Activated B cell treated with CpG ODN at 0.5 μM for 24 hours (primary cell): ENCODE measurements at regions of chr1 and their contacts with region 1.

Region 1: GRCh38 chr1:206982216-206982615 is 12.0 kb upstream of the FCAMR start:
- DNase-seq: peak; percentile 52
- ATAC-seq: peak; percentile 91
- H3K4me3 Mint-ChIP-seq: no peak overlapping the region
- H3K27ac Mint-ChIP-seq: no peak overlapping the region
- H3K4me1 Mint-ChIP-seq: no peaks in the 10 kb centered on the region
- H3K27me3 Mint-ChIP-seq: peaks cover 5% of the 10 kb centered on the region
- CTCF ChIP-seq: no peak

Region 2: DNA sequence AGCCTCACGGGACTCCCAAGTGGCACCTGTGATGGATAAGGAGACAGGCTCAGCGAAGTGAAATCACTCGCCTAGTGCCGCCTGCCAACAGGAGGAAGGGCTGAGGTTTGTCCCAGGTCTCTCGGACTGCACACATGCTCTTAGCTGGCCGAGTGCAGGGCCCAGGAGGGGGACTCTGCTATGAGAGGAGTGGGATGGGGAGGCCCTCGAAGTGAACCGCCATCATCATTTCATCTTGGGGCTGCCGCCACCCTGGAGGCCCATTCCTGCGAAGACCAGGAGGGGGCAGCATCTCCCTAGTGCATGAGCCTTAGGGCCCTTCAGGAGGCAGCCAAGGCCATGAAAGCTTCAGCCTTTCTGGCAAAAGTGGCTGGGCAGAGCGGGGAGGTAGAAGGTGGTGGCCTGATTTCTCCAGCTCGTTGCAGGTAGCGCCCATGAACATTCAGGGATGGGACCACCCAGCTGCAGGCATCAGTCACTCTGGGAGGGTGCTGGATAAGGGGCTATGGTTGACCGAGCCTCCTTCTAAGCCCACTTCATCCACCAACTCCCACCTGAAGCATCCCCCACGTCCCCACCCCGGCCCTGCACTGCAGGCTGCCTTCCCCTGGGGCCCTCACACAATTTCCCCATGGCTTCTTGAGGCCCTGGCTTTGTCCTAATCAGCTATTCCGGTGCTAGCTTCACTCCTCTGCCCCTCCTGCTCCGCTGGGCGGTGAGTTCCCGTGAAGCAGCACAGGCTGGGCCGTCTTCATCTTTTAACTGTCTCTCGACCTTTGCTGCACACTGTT is 492.0 kb before region 1 on chr1:
- CTCF ChIA-PET with region 1: interaction called, 5 read pairs
- POLR2A ChIA-PET with region 1: no interaction called
- intact Hi-C with region 1: loop called (anchors 1 kb)
- DNase-seq: peak; percentile 66
- ATAC-seq: peak; percentile 95
- H3K4me3 Mint-ChIP-seq: no peak overlapping the region
- H3K27ac Mint-ChIP-seq: no peak overlapping the region
- H3K4me1 Mint-ChIP-seq: peaks cover 10% of the 10 kb centered on the region
- H3K27me3 Mint-ChIP-seq: no peaks in the 10 kb centered on the region
- CTCF ChIP-seq: no peak

Region 3: GRCh38 chr1:206658264-206658980 is 323.8 kb before region 1 on chr1:
- CTCF ChIA-PET with region 1: interaction called, 19 read pairs
- POLR2A ChIA-PET with region 1: no interaction called
- intact Hi-C with region 1: loop called (anchors 1 kb)
- DNase-seq: peak; percentile 52
- ATAC-seq: peak; percentile 85
- H3K4me3 Mint-ChIP-seq: peak overlapping the region; percentile 58
- H3K27ac Mint-ChIP-seq: no peak overlapping the region
- H3K4me1 Mint-ChIP-seq: peaks cover 15% of the 10 kb centered on the region
- H3K27me3 Mint-ChIP-seq: peaks cover 4% of the 10 kb centered on the region
- CTCF ChIP-seq: no peak

Region 4: DNA sequence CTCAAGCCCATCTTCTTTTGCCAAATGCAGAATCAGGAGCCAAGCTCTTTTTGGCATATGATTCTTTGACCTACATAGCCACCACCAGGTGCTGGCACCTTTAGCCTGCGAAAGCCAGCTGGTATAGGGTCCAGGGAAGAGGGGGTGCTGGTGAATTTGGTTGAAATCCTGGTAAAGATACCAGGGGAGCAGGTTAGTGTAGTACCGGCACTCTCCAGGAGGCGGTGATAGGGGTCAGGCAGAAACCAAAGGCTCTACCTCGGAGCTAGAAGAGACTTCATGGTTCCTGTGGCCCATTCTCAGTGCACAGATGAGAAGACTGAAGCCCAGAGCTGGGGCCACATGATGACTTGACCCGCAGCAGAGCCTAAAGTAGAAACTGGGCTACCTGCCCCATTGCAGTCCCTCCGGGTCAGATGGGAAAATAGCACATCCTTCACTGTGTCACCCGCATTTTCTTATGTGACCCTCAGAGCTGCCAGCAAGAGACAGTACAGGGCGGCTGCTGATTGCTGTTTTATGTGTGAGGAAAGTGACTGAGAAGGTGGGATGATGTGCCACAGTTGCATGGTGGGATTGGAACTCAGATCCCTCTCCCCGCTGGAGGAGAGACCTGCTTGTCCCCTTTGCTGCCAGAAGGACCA is 247.6 kb before region 1 on chr1:
- CTCF ChIA-PET with region 1: interaction called, 59 read pairs
- POLR2A ChIA-PET with region 1: interaction called, 9 read pairs
- intact Hi-C with region 1: loop called (anchors 1 kb)
- DNase-seq: peak; percentile 74
- ATAC-seq: peak; percentile 69
- H3K4me3 Mint-ChIP-seq: no peak overlapping the region
- H3K27ac Mint-ChIP-seq: peak overlapping the region; percentile 24
- H3K4me1 Mint-ChIP-seq: peaks cover 43% of the 10 kb centered on the region
- H3K27me3 Mint-ChIP-seq: no peaks in the 10 kb centered on the region
- CTCF ChIP-seq: peak; percentile 41

Region 5: GRCh38 chr1:206856674-206857464 is 125.3 kb before region 1 on chr1:
- CTCF ChIA-PET with region 1: interaction called, 16 read pairs
- POLR2A ChIA-PET with region 1: no interaction called
- intact Hi-C with region 1: loop called (anchors 2 kb)
- DNase-seq: no peak
- ATAC-seq: peak; percentile 78
- H3K4me3 Mint-ChIP-seq: no peak overlapping the region
- H3K27ac Mint-ChIP-seq: no peak overlapping the region
- H3K4me1 Mint-ChIP-seq: peaks cover 6% of the 10 kb centered on the region
- H3K27me3 Mint-ChIP-seq: peaks cover 12% of the 10 kb centered on the region
- CTCF ChIP-seq: no peak

Region 6: GRCh38 chr1:206935491-206936067 is 46.6 kb before region 1 on chr1:
- CTCF ChIA-PET with region 1: interaction called, 72 read pairs
- POLR2A ChIA-PET with region 1: no interaction called
- intact Hi-C with region 1: loop called (anchors 1 kb)
- DNase-seq: peak; percentile 41
- ATAC-seq: no peak
- H3K4me3 Mint-ChIP-seq: no peak overlapping the region
- H3K27ac Mint-ChIP-seq: no peak overlapping the region
- H3K4me1 Mint-ChIP-seq: peaks cover 34% of the 10 kb centered on the region
- H3K27me3 Mint-ChIP-seq: no peaks in the 10 kb centered on the region
- CTCF ChIP-seq: no peak

Region 7: DNA sequence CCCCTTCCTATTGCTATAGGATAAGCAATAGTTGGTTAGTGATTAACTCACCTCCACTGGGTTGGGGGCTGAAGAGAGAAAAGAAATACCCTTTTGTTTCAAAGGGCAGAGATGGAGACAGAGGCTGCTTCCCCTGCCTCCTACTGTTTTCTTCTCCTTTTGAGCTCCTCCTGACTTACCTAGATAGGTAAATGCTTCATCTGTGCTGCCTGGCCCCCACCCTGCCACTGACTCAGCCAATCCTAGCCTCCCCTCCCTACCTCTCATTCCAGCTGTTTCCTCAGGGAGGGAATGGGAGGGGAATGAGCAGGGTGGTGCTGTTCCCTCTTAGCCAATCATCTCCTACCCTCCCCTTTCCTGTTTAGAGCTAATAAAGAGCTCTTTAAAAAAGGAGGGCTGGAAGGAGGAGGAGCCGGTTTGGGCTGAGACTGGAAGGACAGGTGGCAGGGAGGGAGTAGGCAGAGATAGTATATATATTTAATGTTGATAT is 50.4 kb after region 1 on chr1 and contains the start of gene C1orf116:
- CTCF ChIA-PET with region 1: no interaction called
- POLR2A ChIA-PET with region 1: no interaction called
- intact Hi-C with region 1: no loop called
- DNase-seq: no peak
- ATAC-seq: no peak
- H3K4me3 Mint-ChIP-seq: no peak within 1 kb of the TSS
- H3K27ac Mint-ChIP-seq: no peak within 1 kb of the TSS
- H3K4me1 Mint-ChIP-seq: no peaks in the 10 kb centered on the region
- H3K27me3 Mint-ChIP-seq: peaks cover 37% of the 10 kb centered on the region
- CTCF ChIP-seq: no peak
- total RNA-seq, gene C1orf116: 0.09 TPM in 1 of 2 replicates, not detected in the other

Region 8: DNA sequence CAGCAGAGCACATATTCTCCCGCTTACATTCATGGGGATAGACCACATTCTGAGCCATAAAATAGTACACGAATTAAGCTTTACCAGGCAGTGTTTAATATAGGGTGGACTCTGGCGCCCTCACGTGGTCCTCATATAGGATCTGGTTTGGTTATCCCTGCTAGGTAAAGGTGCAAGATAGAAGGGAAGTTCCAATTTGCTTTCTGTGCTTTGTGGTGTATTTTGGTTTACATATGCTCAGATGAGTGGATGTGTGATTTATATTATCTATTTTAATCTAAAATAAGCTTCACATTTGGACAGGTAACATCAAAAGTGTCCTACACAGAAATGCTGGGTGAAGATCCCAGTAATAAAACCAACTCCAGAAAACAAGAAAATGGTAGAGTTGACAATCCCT is 517.4 kb after region 1 on chr1:
- CTCF ChIA-PET with region 1: interaction called, 12 read pairs
- POLR2A ChIA-PET with region 1: no interaction called
- intact Hi-C with region 1: loop called (anchors 2 kb)
- DNase-seq: peak; percentile 42
- ATAC-seq: peak; percentile 61
- H3K4me3 Mint-ChIP-seq: no peak overlapping the region
- H3K27ac Mint-ChIP-seq: peak overlapping the region; percentile 64
- H3K4me1 Mint-ChIP-seq: peaks cover 38% of the 10 kb centered on the region
- H3K27me3 Mint-ChIP-seq: no peaks in the 10 kb centered on the region
- CTCF ChIP-seq: peak; percentile 60